ENCODE measurements at regions of chr6 and their contacts with region 1.

Region 1: DNA sequence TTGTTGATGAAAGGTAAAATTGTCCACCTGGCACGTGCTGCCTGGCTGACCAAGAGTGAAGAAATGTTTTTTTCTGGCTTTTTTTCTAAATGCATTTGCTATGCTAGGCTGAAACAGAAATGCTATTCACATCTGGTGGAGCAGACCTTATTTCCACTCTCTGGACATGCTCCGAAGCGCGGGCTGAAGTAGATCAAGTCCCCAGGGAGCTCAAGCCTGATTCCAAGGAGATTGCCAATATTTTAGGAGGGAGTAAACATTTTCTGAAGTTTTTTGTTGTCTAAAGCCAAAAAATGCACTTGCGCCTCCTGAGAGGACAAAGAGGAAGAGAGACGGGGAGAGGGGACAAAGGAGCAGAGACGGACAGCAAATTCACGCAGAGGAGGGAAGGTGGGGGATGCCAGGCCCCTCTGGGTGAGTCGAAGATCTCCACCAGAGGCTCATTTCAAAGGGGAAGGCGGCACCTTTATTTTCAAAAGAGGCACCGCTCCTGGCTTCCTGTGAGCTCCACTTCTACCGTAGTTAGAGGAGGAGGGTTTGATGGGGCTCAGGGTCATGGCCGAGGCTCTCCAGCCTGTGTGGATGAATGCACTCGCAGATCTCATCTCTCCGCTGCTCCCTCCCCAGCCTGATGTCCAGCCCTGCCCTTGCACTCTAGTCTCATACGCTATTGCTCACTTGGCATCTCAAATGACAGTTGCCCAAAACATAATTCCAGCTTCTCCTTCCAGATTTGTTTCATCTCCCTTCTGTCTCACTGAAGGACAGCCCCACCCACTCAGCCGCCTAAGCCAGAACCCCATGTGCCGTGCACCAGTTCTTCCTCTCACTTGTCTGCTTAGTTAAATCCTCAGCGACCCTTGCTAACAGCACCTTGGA is 23.1 kb upstream of the SMOC2 start:
- DNase-seq: no peak
- ATAC-seq: no peak
- H3K4me3 ChIP-seq: no peak overlapping the region
- H3K4me3 Mint-ChIP-seq: no peak overlapping the region
- H3K27ac ChIP-seq: no peak overlapping the region
- H3K27ac Mint-ChIP-seq: no peak overlapping the region
- H3K4me1 ChIP-seq: no peaks in the 10 kb centered on the region
- H3K4me1 Mint-ChIP-seq: no peaks in the 10 kb centered on the region
- H3K27me3 ChIP-seq: peaks cover 0 to 10% of the 10 kb centered on the region in 2 experiments
- H3K27me3 Mint-ChIP-seq: peaks cover 0 to 7% of the 10 kb centered on the region in 2 donors

Region 2: DNA sequence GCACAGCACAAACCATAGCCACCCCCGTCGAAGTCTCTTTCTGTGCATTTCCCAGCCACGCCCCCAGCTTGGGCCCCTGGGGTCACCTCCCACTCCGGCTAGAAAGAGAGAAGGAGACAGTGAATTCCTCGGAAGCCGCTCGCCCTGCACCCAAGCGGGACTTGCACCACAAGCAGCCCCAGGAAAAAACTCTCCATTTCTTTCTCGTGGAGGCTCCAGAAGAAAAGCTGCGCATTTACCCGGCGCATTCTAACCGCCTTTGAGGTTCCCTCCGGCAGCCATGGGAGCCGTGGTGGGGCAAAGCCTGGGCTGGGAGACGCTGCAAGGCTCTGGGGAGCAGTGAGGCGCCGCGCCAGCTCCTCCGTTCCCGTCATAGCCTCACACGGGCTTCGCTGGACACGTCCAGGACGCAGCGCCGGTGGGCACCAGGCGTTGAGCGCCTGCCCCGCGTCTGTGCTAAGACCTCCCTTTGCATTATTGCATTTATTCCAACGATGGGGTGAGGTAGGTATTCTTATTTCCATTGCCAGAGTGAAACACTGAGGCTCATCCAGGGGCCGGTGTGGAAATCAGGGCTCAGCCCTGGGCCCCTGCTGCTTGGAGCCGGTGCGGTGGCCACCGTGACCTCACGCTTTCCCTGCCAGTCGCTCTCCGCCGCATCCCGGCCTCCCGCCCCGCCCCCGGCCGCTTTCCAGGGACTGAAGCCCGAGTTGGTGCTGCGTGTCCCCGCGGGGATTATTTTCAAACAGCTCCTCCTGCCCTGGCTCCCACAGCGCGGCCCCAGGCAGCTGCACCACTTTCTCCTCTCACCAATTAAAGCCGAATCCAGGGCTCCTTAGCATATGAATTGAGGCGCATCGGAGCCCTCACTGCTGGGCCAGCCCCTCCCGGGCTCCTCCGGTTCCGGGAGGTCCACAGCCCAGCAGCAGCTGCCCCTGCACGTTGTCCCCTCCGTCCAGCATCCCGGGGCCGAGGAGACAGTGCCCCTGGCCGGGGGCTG is 739.5 kb before region 1 on chr6:
- CTCF ChIA-PET with region 1: no interaction called
- POLR2A ChIA-PET with region 1: no interaction called
- DNase-seq: no peak
- ATAC-seq: no peak
- H3K4me3 ChIP-seq: no peak overlapping the region
- H3K4me3 Mint-ChIP-seq: no peak overlapping the region
- H3K27ac ChIP-seq: no peak overlapping the region
- H3K27ac Mint-ChIP-seq: no peak overlapping the region
- H3K4me1 ChIP-seq: no peaks in the 10 kb centered on the region
- H3K4me1 Mint-ChIP-seq: peaks cover 0 to 3% (median 2%) of the 10 kb centered on the region in 3 donors
- H3K27me3 ChIP-seq: peaks cover 2 to 74% of the 10 kb centered on the region in 2 experiments
- H3K27me3 Mint-ChIP-seq: peaks cover 74 to 84% of the 10 kb centered on the region in 2 donors

Region 3: GRCh38 chr6:168440520-168441433 is 22.9 kb after region 1 on chr6 and contains the start of gene SMOC2:
- CTCF ChIA-PET with region 1: no interaction called
- POLR2A ChIA-PET with region 1: no interaction called
- DNase-seq: no peak
- ATAC-seq: no peak
- H3K4me3 ChIP-seq: no peak within 1 kb of the TSS
- H3K4me3 Mint-ChIP-seq: no peak within 1 kb of the TSS
- H3K27ac ChIP-seq: no peak within 1 kb of the TSS
- H3K27ac Mint-ChIP-seq: no peak within 1 kb of the TSS
- H3K4me1 ChIP-seq: no peaks in the 10 kb centered on the region
- H3K4me1 Mint-ChIP-seq: peaks cover 3 to 5% (median 4%) of the 10 kb centered on the region in 3 donors
- H3K27me3 ChIP-seq: peaks cover 0 to 22% of the 10 kb centered on the region in 2 experiments
- H3K27me3 Mint-ChIP-seq: peaks cover 47 to 51% of the 10 kb centered on the region in 2 donors
- total RNA-seq, gene SMOC2: 0.06 to 0.20 (median 0.16) TPM in 3 of 5 donors, not detected in the others

Region 4: GRCh38 chr6:168459572-168459971 is 41.7 kb after region 1 on chr6:
- CTCF ChIA-PET with region 1: interaction called in 1 of 2 experiments, 10 read pairs
- POLR2A ChIA-PET with region 1: no interaction called
- DNase-seq: no peak
- ATAC-seq: no peak
- H3K4me3 ChIP-seq: no peak overlapping the region
- H3K4me3 Mint-ChIP-seq: no peak overlapping the region
- H3K27ac ChIP-seq: no peak overlapping the region
- H3K27ac Mint-ChIP-seq: no peak overlapping the region
- H3K4me1 ChIP-seq: no peaks in the 10 kb centered on the region
- H3K4me1 Mint-ChIP-seq: no peaks in the 10 kb centered on the region
- H3K27me3 ChIP-seq: peaks cover 0 to 23% of the 10 kb centered on the region in 2 experiments
- H3K27me3 Mint-ChIP-seq: peaks cover 3 to 6% of the 10 kb centered on the region in 2 donors